Endothelial cell of umbilical vein (primary cell): ENCODE measurements at regions of chr2 and their contacts with region 1.

Region 1: DNA sequence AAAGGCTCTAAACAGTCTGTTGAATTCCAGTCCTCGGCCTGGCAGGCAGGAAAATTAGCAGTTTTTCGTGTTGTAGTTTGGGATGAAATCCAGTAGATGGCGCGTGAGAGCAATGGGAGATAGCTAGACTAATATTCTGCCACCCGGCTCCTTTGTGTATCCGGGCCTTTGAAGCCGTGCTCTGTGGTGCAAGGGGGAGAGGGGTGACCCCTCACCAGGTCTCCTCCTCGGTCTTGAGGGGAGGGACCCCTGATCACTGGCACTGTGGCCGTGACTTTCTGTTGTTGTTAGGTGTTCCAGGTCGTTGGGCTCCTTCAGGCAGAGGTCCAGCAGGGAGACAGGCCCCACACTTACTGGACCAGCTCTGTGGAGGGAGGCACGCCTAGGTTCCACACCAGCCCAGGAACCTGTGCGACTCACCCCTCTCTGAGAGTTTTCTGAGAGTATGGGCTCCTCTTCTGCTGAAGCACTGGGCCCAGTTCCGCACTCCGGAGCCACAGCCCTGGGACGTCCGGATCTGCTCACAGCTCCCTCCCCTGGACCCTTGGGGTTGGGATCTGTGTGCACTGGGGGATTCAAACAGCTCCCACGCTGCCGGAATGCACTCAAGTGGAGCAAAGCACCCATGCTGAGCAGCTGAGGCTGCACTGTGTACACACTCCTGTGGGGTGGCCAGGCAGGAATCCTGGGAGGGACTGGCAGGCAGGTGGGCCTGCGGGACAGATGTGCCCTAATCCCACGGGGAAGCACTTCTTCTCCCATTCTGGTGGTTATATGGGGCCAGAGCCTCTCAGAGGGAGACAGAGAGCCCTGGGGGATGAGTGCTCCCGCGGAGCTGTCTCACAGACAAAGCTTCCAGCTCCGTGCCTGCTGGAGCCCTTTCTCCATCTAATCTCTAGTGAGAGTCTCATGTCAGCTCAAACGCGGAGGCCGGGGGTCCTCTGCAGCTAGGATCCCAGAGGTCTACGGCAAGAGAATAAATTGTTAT is 8.8 kb downstream of the GKN2 start:
- DNase-seq: peak; percentile 64
- H3K4me3 ChIP-seq: no peak overlapping the region
- H3K27ac ChIP-seq: no peak overlapping the region
- H3K4me1 ChIP-seq: no peaks in the 10 kb centered on the region
- H3K27me3 ChIP-seq: peaks cover 6 to 29% of the 10 kb centered on the region in 2 experiments
- CTCF ChIP-seq: peak; percentile 70 to 71
- POLR2A ChIP-seq: no peak

Region 2: DNA sequence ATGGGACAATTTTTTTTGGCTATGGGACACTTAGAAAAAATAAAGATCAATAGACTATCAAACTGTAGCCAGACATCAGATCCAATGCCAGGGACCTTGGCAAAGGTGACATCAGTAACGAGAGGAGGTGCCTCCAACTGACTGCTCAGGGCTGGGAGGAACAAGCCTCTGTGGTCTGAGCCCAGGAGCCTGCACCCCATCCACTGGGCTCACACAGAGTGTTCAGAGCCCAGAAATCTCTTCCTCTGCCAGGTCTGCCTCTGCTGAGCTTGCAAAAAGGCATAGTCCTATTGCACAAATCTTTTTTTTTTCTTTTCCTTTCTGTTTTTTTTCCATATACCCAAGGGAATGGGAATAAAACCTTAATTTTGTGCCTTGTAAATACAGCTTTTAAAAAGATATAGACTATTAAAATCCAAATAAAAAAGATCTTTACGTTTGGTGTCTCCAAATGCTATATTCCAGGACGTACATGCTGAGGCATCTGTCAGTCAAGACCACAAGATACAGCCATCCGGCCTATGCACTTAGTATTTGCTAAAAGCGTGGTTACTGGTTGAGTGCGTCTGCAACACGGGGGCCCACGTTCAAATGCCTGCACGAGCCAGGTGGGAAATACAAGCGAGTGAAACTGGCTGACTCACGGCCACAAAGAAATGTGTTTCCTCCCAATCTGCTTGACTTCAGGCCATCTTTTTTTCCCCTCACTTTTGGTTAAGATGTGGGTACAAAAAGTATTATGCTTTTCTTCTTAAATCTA is 217.1 kb before region 1 on chr2:
- CTCF ChIA-PET with region 1: no interaction called
- POLR2A ChIA-PET with region 1: no interaction called
- dilution Hi-C with region 1: loop called (anchors 25 kb)
- intact Hi-C with region 1: no loop called
- DNase-seq: no peak
- H3K4me3 ChIP-seq: no peak overlapping the region
- H3K27ac ChIP-seq: no peak overlapping the region
- H3K4me1 ChIP-seq: no peaks in the 10 kb centered on the region
- H3K27me3 ChIP-seq: peaks cover 10 to 16% of the 10 kb centered on the region in 2 experiments
- CTCF ChIP-seq: no peak
- POLR2A ChIP-seq: no peak

Region 3: DNA sequence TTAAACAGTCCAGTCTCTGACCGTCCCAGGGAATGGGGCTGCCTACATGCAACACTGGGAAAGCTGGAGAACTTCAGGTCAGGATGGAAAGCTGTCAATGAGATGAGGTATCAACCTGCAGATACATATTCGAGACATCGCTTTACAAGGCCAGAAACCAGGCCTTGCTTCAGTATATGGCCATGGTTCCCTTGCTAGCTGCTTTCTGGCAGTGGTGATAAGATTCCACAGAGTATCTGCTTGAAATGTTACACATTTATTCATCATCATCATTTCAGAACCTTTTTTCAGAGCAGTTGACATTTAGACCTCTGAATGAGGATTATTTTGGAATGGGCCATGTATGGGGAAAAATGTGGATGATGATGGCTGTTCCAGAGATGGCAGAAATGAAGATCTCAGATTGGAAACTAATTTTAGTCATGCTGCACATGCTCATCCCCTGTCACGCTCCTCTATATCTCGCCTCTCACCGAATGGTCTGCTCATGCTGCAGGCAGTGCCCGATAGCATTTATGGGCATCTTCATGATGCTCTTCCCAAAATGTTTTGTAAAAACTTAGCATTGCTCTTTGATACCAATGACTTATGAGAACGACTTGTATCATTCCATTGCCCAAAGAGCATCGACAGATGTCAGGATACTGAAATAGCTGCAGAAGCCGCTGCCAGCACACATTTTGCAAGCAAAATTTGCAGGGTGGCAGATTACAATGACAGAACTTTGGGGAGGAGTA is 58.6 kb before region 1 on chr2:
- CTCF ChIA-PET with region 1: no interaction called
- POLR2A ChIA-PET with region 1: no interaction called
- dilution Hi-C with region 1: no loop called
- intact Hi-C with region 1: no loop called
- DNase-seq: no peak
- H3K4me3 ChIP-seq: no peak overlapping the region
- H3K27ac ChIP-seq: no peak overlapping the region
- H3K4me1 ChIP-seq: peaks cover 6% of the 10 kb centered on the region
- H3K27me3 ChIP-seq: no peaks in the 10 kb centered on the region
- CTCF ChIP-seq: no peak
- POLR2A ChIP-seq: no peak

Region 4: DNA sequence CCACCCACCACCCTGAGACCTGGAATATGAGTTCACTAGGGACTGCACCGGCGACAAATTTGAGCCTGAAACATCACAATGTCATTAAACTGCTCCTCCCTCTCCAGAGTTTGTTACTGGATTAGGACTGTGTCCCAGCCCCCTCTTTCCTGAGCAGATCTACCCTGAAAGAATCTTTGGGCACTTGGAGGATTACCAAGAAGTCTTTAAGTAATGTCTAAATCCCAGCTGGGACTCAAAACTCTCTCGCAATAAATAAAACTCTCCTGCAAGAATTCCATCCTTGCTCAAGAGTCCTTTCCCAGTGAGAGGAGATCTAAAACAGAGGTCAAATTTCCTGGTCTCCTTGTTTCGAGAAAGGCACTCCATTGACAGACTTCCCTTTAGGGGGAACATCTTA is 12.1 kb before region 1 on chr2:
- CTCF ChIA-PET with region 1: interaction called, 39 read pairs
- POLR2A ChIA-PET with region 1: no interaction called
- dilution Hi-C with region 1: no loop called
- intact Hi-C with region 1: no loop called
- DNase-seq: no peak
- H3K4me3 ChIP-seq: no peak overlapping the region
- H3K27ac ChIP-seq: no peak overlapping the region
- H3K4me1 ChIP-seq: no peaks in the 10 kb centered on the region
- H3K27me3 ChIP-seq: peaks cover 8 to 10% of the 10 kb centered on the region in 2 experiments
- CTCF ChIP-seq: no peak
- POLR2A ChIP-seq: no peak

Region 5: DNA sequence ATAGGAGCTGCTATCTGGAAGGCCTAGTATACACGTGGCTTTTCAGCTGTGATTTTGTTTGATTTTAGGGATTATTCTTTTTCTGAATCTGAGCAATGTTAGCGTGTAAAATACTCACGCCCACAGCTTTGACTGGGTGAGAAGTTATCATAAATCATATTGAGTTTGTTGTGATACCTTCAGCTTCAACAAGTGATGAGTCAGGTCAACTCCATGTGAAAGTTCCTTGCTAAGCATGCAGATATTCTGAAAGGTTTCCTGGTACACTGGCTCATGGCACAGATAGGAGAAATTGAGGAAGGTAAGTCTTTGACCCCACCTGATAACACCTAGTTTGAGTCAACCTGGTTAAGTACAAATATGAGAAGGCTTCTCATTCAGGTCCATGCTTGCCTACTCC is 30.4 kb after region 1 on chr2 and contains the start of gene GKN1:
- CTCF ChIA-PET with region 1: interaction called, 18 read pairs
- POLR2A ChIA-PET with region 1: no interaction called
- dilution Hi-C with region 1: no loop called
- intact Hi-C with region 1: no loop called
- DNase-seq: no peak
- H3K4me3 ChIP-seq: no peak within 1 kb of the TSS
- H3K27ac ChIP-seq: no peak within 1 kb of the TSS
- H3K4me1 ChIP-seq: no peaks in the 10 kb centered on the region
- H3K27me3 ChIP-seq: peaks cover 21 to 22% of the 10 kb centered on the region in 2 experiments
- CTCF ChIP-seq: no peak
- POLR2A ChIP-seq: no peak
- total RNA-seq, gene GKN1: not detected in 2 replicates

Region 6: GRCh38 chr2:69322631-69323030 is 378.8 kb after region 1 on chr2:
- CTCF ChIA-PET with region 1: interaction called, 14 read pairs
- POLR2A ChIA-PET with region 1: no interaction called
- dilution Hi-C with region 1: no loop called
- intact Hi-C with region 1: no loop called
- DNase-seq: no peak
- H3K4me3 ChIP-seq: no peak overlapping the region
- H3K27ac ChIP-seq: no peak overlapping the region
- H3K4me1 ChIP-seq: no peaks in the 10 kb centered on the region
- H3K27me3 ChIP-seq: no peaks in the 10 kb centered on the region
- CTCF ChIP-seq: no peak
- POLR2A ChIP-seq: no peak